ENCODE measurements at regions of chr2 and their contacts with region 1.

Region 1: GRCh38 chr2:183124222-183124956 is at the start of gene NUP35:
- DNase-seq: peak; percentile 93
- total RNA-seq, gene NUP35: 7.0 TPM

Region 2: DNA sequence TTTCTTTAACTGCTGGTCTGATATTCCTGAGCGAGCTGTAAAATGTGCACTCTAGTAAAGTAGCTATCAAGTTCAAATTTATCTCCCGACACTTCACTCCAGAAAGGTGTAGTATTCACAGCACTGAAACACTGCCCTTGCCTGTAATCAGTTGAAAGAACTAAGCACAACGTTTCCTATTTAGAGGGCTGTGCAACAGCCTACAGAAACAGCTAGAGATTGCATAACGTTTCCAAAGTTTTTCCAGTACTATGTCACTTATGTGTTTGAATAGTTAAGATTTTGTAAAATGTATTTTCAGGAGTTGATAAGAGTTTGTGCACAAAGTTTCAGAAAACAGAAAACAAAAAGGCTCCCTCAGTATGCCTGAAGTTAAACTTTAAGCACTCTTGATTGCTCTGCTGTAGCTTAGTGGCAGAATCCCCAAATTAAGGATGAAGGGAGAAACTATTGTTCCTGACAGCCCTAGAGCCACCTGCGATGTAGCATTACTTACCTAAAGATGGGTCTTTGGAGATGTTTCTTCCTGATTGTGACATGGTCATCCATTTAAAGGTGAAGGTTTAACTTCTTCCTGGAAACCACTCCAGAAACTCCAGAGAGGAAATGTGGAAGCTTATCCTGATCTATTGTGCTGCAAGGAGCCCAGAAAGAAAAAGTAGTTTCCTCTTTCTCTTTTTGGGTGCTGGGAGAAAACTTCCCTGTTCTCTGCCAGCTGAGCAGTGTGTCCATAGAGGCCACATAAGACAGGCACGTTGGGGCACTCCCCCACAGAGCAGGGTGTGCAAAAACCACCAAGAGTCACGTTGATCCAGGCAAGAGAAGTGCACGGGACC is 698.1 kb before region 1 on chr2:
- intact Hi-C with region 1: no loop called
- DNase-seq: no peak

Region 3: DNA sequence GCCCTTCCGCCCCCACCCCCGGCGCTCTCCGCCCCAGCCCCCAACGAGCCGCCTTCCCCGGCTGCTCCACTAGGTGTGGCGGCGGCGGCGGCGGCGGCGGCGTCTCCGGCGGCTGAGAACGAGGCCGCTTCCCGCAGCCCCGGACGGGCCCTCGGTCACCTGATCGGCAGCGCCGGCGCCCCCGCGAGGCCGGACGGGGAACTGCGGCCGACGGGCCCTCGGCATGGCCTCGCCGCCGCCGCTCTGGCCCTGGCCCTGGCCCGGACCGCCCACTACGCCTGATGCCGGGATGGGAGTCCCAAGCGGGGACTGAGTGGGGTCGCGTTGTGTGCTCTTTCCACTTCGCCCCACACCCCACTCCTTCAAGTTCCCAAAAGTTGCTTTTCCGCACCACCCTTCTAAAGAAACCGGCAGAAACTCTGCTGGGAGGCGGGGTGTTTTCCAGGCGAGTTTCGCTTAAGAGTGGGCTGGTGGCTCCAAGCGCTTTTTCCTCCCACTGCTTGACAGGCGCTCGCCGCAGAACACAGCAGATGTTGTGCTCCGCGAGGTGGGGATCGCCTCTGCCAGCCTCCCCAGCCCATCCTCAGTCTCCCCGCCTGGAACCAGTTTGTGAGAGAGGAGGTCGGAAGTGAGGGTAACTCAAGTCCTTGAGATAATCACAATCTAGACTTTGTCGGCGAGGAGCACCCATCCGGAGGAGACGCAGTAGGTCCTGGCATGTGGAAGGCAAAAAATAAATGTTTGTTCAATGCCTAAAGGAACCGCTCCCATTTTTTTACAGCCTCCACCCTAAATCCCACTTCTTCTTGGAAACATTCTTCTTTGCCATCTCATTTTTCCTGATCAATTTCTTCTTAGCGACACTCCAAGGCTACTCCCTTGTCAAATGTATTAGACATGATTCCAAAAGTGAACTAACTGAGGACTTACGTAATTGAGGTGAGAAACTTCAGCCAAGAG is 85.8 kb before region 1 on chr2 and contains the start of gene NCKAP1:
- intact Hi-C with region 1: loop called (anchors 1 kb)
- DNase-seq: peak; percentile 94
- total RNA-seq, gene NCKAP1: 153 TPM

Region 4: GRCh38 chr2:183078465-183079138 is 45.8 kb before region 1 on chr2 and contains the start of gene DUSP19:
- intact Hi-C with region 1: loop called (anchors 5 kb)
- DNase-seq: peak; percentile 90
- total RNA-seq, gene DUSP19: 8.6 TPM